Heart right ventricle (tissue), 16 donors: ENCODE measurements at regions of chr4 and their contacts with region 1.

Region 1: GRCh38 chr4:158624889-158625478 is 46.7 kb downstream of the C4orf46 start:
- DNase-seq: peak in 1 of 2 donors; percentile 19
- ATAC-seq: peak in 7 of 8 donors; percentile 46 to 89 (median 80)
- H3K4me3 ChIP-seq: no peak overlapping the region
- H3K27ac ChIP-seq: peak overlapping the region in 3 of 10 donors; percentile 12 to 61 (median 56)
- H3K4me1 ChIP-seq: peaks cover 0 to 31% (median 6%) of the 10 kb centered on the region in 9 donors
- H3K27me3 ChIP-seq: no peaks in the 10 kb centered on the region
- CTCF ChIP-seq: peak; percentile 43 to 80 (median 72)

Region 2: DNA sequence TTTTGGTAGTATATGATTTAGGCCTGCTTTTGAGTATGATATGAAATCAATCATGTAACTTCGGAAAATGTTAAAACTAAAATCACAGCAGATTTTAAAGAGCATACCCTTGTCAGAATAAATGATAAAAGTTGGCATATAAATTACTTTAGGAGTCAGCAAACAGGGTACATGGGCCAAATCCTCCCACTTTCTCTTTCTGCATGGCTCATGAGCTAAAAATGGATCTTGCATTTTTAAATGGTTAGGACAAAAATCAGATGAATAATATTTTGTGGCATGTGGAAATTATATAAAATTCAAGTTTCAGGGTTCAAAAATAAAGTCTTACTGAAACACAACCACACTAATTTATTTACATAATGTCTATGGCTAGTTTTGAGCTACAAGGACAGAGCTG is 667.1 kb before region 1 on chr4:
- intact Hi-C with region 1: no loop called
- DNase-seq: no peak
- ATAC-seq: no peak
- H3K4me3 ChIP-seq: no peak overlapping the region
- H3K27ac ChIP-seq: no peak overlapping the region
- H3K4me1 ChIP-seq: peaks cover 0 to 3% (median 0%) of the 10 kb centered on the region in 9 donors
- H3K27me3 ChIP-seq: no peaks in the 10 kb centered on the region
- CTCF ChIP-seq: no peak

Region 3: GRCh38 chr4:157992038-157992705 is 632.8 kb before region 1 on chr4:
- intact Hi-C with region 1: loop called in 3 of 10 experiments (anchors 5 to 10 kb)
- DNase-seq: peak in 1 of 2 donors; percentile 87
- ATAC-seq: peak in 7 of 8 donors; percentile 75 to 94 (median 86)
- H3K4me3 ChIP-seq: peak overlapping the region in 9 of 10 donors; percentile 14 to 54 (median 43)
- H3K27ac ChIP-seq: peak overlapping the region; percentile 42 to 87 (median 74)
- H3K4me1 ChIP-seq: peaks cover 0 to 33% (median 12%) of the 10 kb centered on the region in 9 donors
- H3K27me3 ChIP-seq: no peaks in the 10 kb centered on the region
- CTCF ChIP-seq: peak; percentile 58 to 87 (median 77)

Region 4: DNA sequence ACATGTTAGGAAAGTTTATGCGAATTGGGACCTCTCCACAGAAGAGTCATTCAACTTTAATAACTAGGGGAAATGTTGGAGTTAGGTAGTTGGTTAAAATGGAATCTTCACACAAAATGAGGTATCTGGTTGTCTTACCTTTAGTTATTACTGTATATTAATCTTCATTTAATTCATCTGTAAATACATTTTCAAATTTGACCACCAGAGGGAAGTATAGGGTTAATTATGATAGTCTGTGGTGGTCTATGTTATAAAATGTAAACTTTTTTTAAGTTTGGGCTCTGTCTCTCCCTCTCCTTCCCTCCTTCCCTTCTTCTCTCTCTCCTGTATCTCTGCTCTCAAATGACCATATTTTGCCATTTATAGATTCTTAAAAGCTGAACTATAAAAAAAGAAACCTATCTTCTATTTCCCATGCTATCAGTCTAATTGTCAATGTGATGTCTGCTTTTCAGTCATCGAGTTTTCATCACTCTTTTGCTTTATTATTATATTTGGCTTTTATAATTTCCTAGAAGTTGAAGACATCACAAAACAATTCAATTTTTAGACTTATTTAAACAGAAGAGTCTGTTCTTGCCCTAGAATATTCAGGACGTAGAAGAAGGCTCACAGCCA is 364.9 kb before region 1 on chr4:
- intact Hi-C with region 1: loop called in 8 of 10 experiments (anchors 2 to 10 kb)
- DNase-seq: no peak
- ATAC-seq: no peak
- H3K4me3 ChIP-seq: no peak overlapping the region
- H3K27ac ChIP-seq: no peak overlapping the region
- H3K4me1 ChIP-seq: no peaks in the 10 kb centered on the region
- H3K27me3 ChIP-seq: no peaks in the 10 kb centered on the region
- CTCF ChIP-seq: peak in 8 of 9 donors; percentile 5 to 51 (median 35)

Region 5: DNA sequence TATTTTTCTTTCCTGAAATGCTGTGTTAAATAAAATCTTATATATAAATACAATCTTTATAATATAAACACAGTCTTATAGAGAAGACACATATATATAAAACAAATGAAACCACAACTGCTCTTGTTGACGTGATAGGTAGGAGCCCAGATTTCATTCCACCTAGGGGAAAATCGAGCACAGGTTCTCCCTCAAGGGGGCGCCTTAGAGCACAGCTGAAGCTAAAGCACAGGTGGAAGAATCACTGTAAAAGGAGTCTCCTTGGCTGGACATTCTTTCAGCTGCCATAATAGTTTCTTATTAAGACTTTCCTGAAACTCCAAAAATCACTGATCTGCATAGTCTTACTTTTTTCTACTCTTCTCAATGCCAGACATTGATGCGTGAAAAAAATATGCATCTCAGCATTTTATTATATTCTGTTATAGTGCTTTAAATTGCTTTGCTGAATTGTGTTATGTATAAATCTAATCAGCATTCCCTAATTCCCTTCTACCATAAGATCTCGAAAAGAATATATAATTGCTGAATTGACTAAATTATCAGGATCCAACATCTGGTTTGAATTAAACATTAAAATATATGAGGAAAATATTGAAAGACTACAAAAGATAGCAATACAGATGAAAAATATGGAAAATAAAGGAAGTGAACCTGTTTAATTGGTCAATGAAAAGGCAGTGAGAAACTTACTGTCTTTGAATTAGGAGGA is 128.8 kb before region 1 on chr4:
- intact Hi-C with region 1: loop called in 4 of 10 experiments (anchors 1 to 10 kb)
- DNase-seq: peak; percentile 18 to 21
- ATAC-seq: no peak
- H3K4me3 ChIP-seq: no peak overlapping the region
- H3K27ac ChIP-seq: no peak overlapping the region
- H3K4me1 ChIP-seq: no peaks in the 10 kb centered on the region
- H3K27me3 ChIP-seq: no peaks in the 10 kb centered on the region
- CTCF ChIP-seq: peak in 8 of 9 donors; percentile 12 to 69 (median 60)

Region 6: DNA sequence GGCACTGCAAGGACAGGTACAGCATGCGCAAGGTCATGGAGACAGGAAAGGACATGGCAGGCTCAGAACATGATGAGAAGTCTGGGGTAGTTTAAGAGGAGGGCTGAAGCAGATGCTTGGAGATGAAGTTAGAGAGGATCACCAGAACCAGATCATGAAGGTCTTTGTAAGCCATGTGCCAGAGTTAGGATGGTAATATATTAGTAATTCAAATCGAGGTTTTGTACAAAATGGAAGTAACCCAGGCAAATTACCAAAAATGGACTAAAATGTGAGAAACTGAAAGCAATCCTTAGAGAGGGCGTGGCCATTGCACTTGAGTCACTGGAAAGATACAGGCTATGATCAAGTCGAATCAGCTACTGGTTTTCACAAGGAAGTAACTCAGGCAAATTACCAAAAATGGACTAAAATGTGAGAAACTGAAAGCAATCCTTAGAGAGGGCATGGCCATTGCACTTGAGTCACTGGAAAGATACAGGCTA is 89.8 kb before region 1 on chr4:
- intact Hi-C with region 1: no loop called
- DNase-seq: no peak
- ATAC-seq: no peak
- H3K4me3 ChIP-seq: no peak overlapping the region
- H3K27ac ChIP-seq: no peak overlapping the region
- H3K4me1 ChIP-seq: no peaks in the 10 kb centered on the region
- H3K27me3 ChIP-seq: no peaks in the 10 kb centered on the region
- CTCF ChIP-seq: no peak